Activated CD4-positive, alpha-beta T cell treated with anti-CD3 and anti-CD28 coated beads, Interleukin-2, amount 10 ng/mL, durations not matched to agents 7 days and 5 days (primary cell): ENCODE measurements at regions of chr19 and their contacts with region 1.

Region 1: DNA sequence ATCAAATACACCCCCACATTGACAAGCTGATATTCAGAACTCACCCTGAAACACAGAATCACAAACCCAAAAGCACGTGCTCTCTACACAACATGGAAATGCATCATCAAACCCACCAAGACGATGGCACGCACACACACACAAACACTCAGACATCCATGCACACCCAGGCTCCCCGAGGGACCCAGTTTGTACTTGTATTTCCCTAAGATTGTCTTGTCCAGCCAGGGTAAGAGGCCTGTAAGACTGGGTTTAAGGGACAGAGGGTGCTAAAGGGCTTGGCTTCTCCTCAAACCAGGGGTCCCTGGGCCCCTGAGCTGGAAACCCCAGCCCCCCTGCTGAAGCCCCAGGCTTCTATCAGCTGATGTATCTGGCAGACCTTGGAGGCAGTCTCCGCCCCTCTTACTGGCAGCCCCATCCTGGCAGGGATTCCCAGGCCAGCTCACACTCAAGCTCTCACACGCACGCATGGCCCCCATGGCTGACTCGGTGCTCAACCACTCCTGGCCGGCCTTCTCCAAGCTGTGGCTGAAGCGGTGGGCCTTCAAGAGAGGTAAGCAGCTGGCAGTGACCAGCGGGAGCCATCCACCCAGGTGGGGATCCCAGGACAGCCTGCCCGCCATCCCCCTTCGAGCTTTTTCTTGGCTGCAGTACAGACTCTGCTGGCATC is 6.5 kb downstream of the ARHGEF18 start:
- DNase-seq: no peak
- H3K4me3 Mint-ChIP-seq: no peak overlapping the region
- H3K27ac Mint-ChIP-seq: peak overlapping the region; percentile 68
- H3K4me1 Mint-ChIP-seq: peaks cover 64% of the 10 kb centered on the region
- H3K27me3 Mint-ChIP-seq: no peaks in the 10 kb centered on the region

Region 2: DNA sequence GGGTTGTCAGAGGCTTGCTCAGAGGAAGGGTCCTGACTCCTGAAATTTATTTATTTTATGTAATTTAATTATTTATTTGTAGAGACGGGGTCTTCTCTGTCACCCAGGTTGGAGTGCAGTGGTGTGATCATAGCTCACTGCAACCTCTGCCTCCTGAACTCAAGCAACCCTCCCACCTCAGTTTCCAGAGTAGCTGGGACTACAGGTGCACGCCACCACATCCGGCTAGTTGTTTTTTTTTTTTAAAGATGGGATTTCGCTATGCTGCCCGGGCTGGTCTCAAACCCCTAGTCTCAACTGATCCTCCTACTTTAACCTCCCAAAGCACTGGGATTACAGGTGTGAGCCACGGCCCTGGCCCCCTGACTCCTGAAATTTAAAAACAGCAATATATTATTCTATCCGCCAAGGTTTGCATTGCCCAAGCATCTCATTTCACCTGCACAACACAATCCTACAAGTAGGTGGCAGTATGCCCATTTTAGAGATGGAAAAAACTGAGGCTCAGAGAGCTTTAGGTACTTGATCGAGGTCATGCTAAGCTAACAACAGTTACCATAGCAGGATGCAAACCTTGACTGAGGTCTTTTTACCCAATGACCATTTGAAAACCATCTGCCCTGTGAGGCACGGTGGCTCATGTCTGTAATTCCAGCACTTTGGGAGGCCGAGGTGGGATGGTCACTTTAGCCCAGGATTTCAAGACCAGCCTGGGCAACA is 11.6 kb after region 1 on chr19:
- CTCF ChIA-PET with region 1: interaction called, 16 read pairs
- POLR2A ChIA-PET with region 1: no interaction called
- DNase-seq: peak; percentile 48
- H3K4me3 Mint-ChIP-seq: no peak overlapping the region
- H3K27ac Mint-ChIP-seq: no peak overlapping the region
- H3K4me1 Mint-ChIP-seq: peaks cover 13% of the 10 kb centered on the region
- H3K27me3 Mint-ChIP-seq: no peaks in the 10 kb centered on the region